ENCODE measurements at regions of chr18 and their contacts with region 1.

Region 1: GRCh38 chr18:43620936-43621335 is 343.6 kb upstream of the SYT4 start:
- DNase-seq: peak; percentile 50
- H3K4me3 ChIP-seq: no peak overlapping the region
- H3K27ac ChIP-seq: no peak overlapping the region
- H3K4me1 ChIP-seq: no peaks in the 10 kb centered on the region
- H3K27me3 ChIP-seq: no peaks in the 10 kb centered on the region

Region 2: GRCh38 chr18:43060020-43060419 is 560.9 kb before region 1 on chr18:
- in situ Hi-C with region 1: no loop called
- DNase-seq: no peak
- H3K4me3 ChIP-seq: no peak overlapping the region
- H3K27ac ChIP-seq: no peak overlapping the region
- H3K4me1 ChIP-seq: no peaks in the 10 kb centered on the region
- H3K27me3 ChIP-seq: no peaks in the 10 kb centered on the region

Region 3: DNA sequence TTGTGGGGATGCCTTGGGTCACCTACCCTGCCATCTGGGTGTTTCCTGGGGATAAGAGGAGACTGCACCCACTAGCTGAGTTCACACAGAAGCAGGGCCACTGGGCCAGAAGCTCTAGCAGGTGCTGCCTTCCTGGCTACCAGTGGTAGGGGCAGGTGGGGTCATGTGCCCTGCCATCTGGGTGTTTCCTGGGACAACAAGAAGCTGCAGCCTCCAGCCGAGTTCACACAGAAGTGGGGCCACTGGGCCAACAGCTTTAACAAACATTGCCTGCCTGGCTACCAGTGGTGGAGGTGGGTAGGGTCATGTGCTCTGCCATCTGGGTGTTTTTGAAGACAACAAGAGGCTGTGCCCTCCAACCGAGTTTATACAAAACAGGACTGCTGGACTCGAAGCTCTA is 61.4 kb before region 1 on chr18:
- in situ Hi-C with region 1: no loop called
- DNase-seq: no peak
- H3K4me3 ChIP-seq: no peak overlapping the region
- H3K27ac ChIP-seq: no peak overlapping the region
- H3K4me1 ChIP-seq: no peaks in the 10 kb centered on the region
- H3K27me3 ChIP-seq: 0 out of 2 replicates have a peak, but pooled peaks cover 2% of the 10 kb centered on the region

Region 4: DNA sequence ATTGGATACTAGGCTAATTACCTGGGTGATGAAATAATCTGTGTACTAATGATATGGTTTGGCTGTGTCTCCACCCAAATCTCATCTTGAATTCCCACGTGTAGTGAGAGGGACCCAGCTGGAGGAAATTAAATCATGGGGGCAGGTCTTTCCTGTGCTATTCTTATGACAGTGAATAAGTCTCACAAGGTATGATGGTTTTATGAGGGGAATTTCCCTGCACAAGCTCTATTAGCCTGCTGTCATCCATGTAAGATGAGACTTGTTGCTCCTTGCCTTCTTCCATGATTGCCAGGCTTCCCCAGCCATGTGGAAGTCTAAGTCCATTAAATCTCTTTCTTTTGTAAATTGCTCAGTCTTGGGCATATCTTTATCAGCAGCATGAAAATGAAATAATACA is 50.5 kb after region 1 on chr18:
- in situ Hi-C with region 1: loop called (anchors 10 kb)
- DNase-seq: no peak
- H3K4me3 ChIP-seq: no peak overlapping the region
- H3K27ac ChIP-seq: no peak overlapping the region
- H3K4me1 ChIP-seq: peaks cover 5% of the 10 kb centered on the region; the same call in 1 of the 2 replicates
- H3K27me3 ChIP-seq: no peaks in the 10 kb centered on the region

Region 5: DNA sequence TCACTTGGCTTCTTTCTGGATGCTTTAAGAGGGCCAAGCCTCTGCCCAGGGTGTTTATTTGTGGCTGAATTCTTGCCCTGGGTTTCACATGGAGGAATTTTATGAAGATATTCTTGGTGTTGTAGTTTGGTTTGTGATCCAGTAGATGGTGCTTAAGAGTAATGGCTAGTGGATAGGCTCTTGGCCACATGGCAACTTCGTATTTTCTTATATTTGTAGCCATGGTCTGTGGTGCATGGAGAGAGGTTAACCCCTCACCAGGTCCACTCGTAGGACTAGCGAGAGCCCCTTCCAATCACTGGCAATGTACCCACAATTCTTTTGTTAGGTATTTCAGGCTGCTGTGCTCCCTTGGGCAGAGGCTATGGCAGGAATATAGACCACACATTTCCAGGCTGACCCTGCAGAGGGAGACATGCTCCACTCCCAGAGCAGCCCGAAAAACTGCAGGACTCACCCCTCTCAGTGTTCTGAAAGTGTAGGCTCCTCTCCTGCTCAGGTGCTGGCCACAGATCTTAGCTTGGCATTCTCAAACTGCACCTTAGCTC is 477.7 kb after region 1 on chr18:
- in situ Hi-C with region 1: loop called (anchors 25 kb)
- DNase-seq: peak; percentile 71
- H3K4me3 ChIP-seq: no peak overlapping the region
- H3K27ac ChIP-seq: no peak overlapping the region
- H3K4me1 ChIP-seq: no peaks in the 10 kb centered on the region
- H3K27me3 ChIP-seq: no peaks in the 10 kb centered on the region

Region 6: DNA sequence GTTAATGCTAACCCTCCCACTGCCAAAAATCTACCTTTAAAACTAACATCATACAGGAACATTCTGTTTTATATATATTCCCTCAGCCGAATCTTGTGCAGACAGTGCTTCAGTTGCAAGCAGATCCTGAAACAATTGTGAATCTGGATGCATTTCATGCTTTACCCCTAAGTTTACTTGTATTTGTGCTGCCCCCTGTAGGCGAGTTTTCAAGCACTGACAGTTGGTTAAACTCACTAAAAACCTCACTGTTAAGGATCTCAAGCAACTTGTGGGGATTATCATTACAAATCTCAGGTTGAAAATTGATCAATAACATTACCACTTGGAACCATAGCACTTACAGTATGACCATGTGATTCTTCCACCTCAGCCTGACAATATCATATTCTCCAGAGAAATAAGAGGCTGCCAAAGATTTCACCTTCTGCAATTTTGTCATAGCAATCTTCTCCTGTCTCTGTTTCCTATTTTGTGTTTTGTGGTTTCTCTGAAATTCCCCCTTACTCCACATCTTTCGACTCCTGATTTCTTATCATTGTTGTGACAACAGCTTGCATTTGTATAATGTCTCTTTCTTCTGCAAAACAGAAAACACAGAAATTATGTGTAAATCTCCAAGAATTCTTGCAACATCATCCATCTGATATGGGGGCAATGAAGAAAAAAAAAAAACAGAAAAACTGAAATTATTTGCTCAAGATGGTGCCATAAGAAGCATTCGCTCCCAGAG is 705.1 kb after region 1 on chr18:
- in situ Hi-C with region 1: loop called (anchors 25 kb)
- DNase-seq: peak; percentile 73
- H3K4me3 ChIP-seq: no peak overlapping the region
- H3K27ac ChIP-seq: no peak overlapping the region
- H3K4me1 ChIP-seq: no peaks in the 10 kb centered on the region; the same call in 1 of the 2 replicates
- H3K27me3 ChIP-seq: no peaks in the 10 kb centered on the region

Measured in GM23248 (cell line).